ENCODE measurements at regions of chr9 and their contacts with region 1.

Region 1: DNA sequence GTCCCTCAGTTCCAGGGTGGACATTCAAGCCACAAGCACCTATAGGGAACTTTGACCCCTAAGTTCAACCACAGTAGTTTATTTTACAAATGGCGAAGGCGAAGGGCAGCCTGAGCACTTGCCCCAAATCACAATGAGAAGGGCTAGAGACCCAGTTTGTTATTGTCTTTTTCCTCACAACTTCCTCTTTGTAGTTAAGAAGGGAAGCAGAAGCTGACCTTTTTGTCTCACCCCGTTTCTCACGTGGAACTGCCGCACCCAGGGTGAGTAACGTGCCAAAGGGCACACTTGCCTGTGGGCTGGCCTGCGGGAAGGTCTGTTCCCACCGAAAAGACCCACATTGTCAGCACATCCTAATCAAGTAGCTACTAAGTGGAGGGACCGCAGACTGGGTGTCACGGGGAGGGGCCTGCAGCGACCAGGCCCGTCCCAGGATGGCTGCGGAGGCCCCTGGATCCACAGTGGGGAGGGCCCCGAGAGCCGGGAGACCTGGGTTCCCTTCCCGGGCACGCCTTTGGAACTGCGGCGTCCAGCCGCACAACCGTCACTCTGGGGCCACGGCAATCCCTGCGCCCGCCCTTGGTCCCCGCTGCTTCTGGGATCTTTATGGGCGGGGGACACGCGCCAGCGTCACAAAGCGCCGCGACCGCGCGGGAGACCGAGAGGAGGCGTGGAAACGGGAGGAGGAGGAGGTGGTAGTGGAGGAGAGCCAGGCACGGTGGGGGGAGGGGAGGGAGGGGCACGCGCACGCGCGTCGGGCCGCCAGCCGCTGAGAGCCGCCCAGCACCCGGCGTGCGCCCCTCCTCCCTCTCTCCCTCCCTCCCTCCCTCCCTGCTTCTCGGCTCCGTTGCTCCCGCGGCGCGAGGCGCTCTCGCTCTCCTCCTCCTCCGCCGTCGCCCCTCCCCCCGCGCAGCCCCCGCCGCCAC is at the start of gene UBE2R2:
- DNase-seq: peak; percentile 88
- H3K4me3 Mint-ChIP-seq: peak within 1 kb of the TSS; percentile 80
- H3K27ac Mint-ChIP-seq: peak within 1 kb of the TSS; percentile 82
- H3K4me1 Mint-ChIP-seq: peaks cover 27% of the 10 kb centered on the region
- H3K27me3 Mint-ChIP-seq: no peaks in the 10 kb centered on the region
- CTCF ChIP-seq: no peak
- total RNA-seq, gene UBE2R2: 33.8 and 41.6 TPM in 2 replicates

Region 2: DNA sequence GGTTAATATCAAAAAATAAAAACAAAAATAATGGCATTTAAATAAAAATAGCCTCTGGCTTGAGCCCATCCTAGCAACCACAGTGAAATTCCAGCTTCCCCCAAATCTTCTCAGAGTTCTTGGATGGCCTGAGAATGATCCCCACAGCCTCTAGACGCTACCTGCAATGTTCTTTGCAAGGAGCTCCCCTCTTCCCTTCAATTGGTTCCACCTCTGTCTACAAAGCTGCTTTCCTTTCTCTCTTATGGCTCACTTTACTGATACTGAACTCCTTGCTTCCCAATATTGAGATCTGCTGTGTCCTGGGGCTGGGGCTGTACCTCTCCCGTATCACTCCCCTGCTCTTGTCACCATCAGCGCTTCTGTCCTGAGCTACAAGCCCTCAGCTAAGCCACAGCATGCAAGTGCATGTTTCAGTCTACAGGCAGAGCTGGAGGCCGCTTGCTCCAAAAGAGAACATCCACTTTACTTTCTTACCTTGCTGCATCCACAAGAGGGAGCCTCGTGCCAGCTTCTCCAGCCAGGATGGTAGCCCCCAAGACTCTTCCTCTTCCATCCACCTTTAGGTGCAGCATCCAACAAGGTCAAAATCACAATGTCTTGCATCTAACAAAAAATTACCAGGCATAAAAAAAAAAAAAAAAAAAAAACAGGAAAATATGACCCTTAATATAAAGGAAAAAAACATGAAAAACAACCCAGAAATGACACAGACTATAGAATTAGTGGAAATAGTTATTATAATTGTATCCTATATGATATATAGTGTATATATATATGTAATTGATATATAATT is 78.6 kb before region 1 on chr9:
- CTCF ChIA-PET with region 1: interaction called, 5 read pairs
- POLR2A ChIA-PET with region 1: interaction called, 3 read pairs
- intact Hi-C with region 1: loop called (anchors 1 kb)
- DNase-seq: peak; percentile 71
- H3K4me3 Mint-ChIP-seq: no peak overlapping the region
- H3K27ac Mint-ChIP-seq: peak overlapping the region; percentile 14
- H3K4me1 Mint-ChIP-seq: peaks cover 23% of the 10 kb centered on the region
- H3K27me3 Mint-ChIP-seq: no peaks in the 10 kb centered on the region
- CTCF ChIP-seq: peak; percentile 88

Region 3: GRCh38 chr9:33835625-33836260 is 19.2 kb after region 1 on chr9:
- CTCF ChIA-PET with region 1: interaction called, 12 read pairs
- POLR2A ChIA-PET with region 1: interaction called, 32 read pairs
- intact Hi-C with region 1: loop called (anchors 1 kb)
- DNase-seq: no peak
- H3K4me3 Mint-ChIP-seq: no peak overlapping the region
- H3K27ac Mint-ChIP-seq: peak overlapping the region; percentile 70
- H3K4me1 Mint-ChIP-seq: peaks cover 10% of the 10 kb centered on the region
- H3K27me3 Mint-ChIP-seq: no peaks in the 10 kb centered on the region
- CTCF ChIP-seq: no peak

Region 4: GRCh38 chr9:33852216-33852826 is 35.7 kb after region 1 on chr9:
- CTCF ChIA-PET with region 1: interaction called, 132 read pairs
- POLR2A ChIA-PET with region 1: interaction called, 56 read pairs
- intact Hi-C with region 1: loop called (anchors 1 kb)
- DNase-seq: peak; percentile 76
- H3K4me3 Mint-ChIP-seq: no peak overlapping the region
- H3K27ac Mint-ChIP-seq: no peak overlapping the region
- H3K4me1 Mint-ChIP-seq: peaks cover 12% of the 10 kb centered on the region
- H3K27me3 Mint-ChIP-seq: no peaks in the 10 kb centered on the region
- CTCF ChIP-seq: peak; percentile 74

Region 5: GRCh38 chr9:33924978-33925797 is 108.6 kb after region 1 on chr9:
- CTCF ChIA-PET with region 1: interaction called, 7 read pairs
- POLR2A ChIA-PET with region 1: no interaction called
- intact Hi-C with region 1: loop called (anchors 10 kb)
- DNase-seq: peak; percentile 67
- H3K4me3 Mint-ChIP-seq: no peak overlapping the region
- H3K27ac Mint-ChIP-seq: no peak overlapping the region
- H3K4me1 Mint-ChIP-seq: no peaks in the 10 kb centered on the region
- H3K27me3 Mint-ChIP-seq: no peaks in the 10 kb centered on the region
- CTCF ChIP-seq: peak; percentile 43

Region 6: DNA sequence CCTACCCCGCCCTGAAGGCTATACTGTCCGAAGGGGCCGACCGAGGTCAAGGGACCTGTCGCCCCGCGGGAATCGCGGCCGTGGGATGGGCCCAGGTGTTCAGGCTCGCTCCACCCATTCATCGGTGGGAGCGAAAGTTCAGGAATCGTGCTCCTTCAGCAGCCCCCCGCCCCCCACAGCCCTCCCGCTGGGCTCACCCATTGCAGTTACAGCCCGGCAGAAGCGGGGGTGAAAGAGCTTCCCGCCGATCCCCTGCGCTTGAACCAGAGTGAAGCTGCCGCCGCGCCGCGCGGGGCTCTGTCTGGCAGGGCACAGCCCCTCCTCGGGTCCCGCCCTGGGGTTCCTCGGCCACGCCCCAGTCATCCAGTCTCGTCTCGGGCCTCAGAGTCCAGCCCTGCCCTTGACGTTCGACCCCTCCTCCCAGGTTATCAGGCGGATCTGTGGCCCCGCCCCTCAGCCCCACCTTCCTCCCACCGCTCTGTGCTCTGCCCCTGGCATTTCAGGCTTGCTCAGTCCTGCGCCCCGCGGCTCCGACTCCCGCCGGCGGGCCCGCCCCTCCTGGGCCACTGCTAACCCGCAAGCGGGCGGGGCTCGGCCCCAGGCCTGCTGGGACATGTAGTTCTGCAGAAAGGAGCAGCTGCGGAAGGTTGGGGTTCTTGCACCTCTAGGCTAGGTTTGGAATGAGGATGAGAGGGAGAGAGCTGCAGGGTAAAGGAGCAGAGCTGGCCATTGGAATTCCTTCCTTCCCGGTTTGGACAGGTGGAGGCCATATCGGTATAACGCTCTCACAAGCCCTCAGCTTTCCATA is 560.2 kb after region 1 on chr9 and contains the start of gene MYORG:
- CTCF ChIA-PET with region 1: no interaction called
- POLR2A ChIA-PET with region 1: no interaction called
- intact Hi-C with region 1: loop called (anchors 5 kb)
- DNase-seq: peak; percentile 98
- H3K4me3 Mint-ChIP-seq: peak within 1 kb of the TSS; percentile 72
- H3K27ac Mint-ChIP-seq: peak within 1 kb of the TSS; percentile 68
- H3K4me1 Mint-ChIP-seq: peaks cover 35% of the 10 kb centered on the region
- H3K27me3 Mint-ChIP-seq: no peaks in the 10 kb centered on the region
- CTCF ChIP-seq: no peak
- total RNA-seq, gene MYORG: 2.4 and 2.9 TPM in 2 replicates

Measured in MCF 10A (cell line).